ENCODE measurements at regions of chr21 and their contacts with region 1.

Region 1: GRCh38 chr21:15064576-15065391 is at the start of gene NRIP1:
- DNase-seq: peak; percentile 72 to 93 (median 82)
- ATAC-seq: peak; percentile 76
- H3K4me3 ChIP-seq: peak within 1 kb of the TSS; percentile 91
- H3K4me3 Mint-ChIP-seq: peak within 1 kb of the TSS; percentile 97
- H3K27ac ChIP-seq: peak within 1 kb of the TSS; percentile 79 to 84
- H3K27ac Mint-ChIP-seq: peak within 1 kb of the TSS; percentile 98
- H3K4me1 ChIP-seq: peaks cover 13% of the 10 kb centered on the region
- H3K4me1 Mint-ChIP-seq: peaks cover 50% of the 10 kb centered on the region
- H3K27me3 ChIP-seq: no peaks in the 10 kb centered on the region
- H3K27me3 Mint-ChIP-seq: peaks cover 5% of the 10 kb centered on the region
- CTCF ChIP-seq: no peak
- total RNA-seq, gene NRIP1: 41.6 to 50.1 TPM

Region 2: GRCh38 chr21:14382835-14383594 is 681.8 kb before region 1 on chr21 and contains the start of gene HSPA13:
- CTCF ChIA-PET with region 1: no interaction called
- POLR2A ChIA-PET with region 1: interaction called, 18 read pairs
- intact Hi-C with region 1: loop called (anchors 5 kb)
- DNase-seq: peak; percentile 95 to 100 (median 98)
- ATAC-seq: peak; percentile 93
- H3K4me3 ChIP-seq: peak within 1 kb of the TSS; percentile 80
- H3K4me3 Mint-ChIP-seq: peak within 1 kb of the TSS; percentile 96
- H3K27ac ChIP-seq: peak within 1 kb of the TSS; percentile 86
- H3K27ac Mint-ChIP-seq: peak within 1 kb of the TSS; percentile 97
- H3K4me1 ChIP-seq: peaks cover 17% of the 10 kb centered on the region
- H3K4me1 Mint-ChIP-seq: peaks cover 44% of the 10 kb centered on the region
- H3K27me3 ChIP-seq: no peaks in the 10 kb centered on the region
- H3K27me3 Mint-ChIP-seq: no peaks in the 10 kb centered on the region
- CTCF ChIP-seq: no peak
- total RNA-seq, gene HSPA13: 39.6 to 41.4 TPM

Region 3: GRCh38 chr21:14388282-14388681 is 676.5 kb before region 1 on chr21:
- CTCF ChIA-PET with region 1: no interaction called
- POLR2A ChIA-PET with region 1: interaction called, 18 read pairs
- intact Hi-C with region 1: loop called (anchors 5 kb)
- DNase-seq: no peak
- ATAC-seq: no peak
- H3K4me3 ChIP-seq: no peak overlapping the region
- H3K4me3 Mint-ChIP-seq: no peak overlapping the region
- H3K27ac ChIP-seq: no peak overlapping the region
- H3K27ac Mint-ChIP-seq: no peak overlapping the region
- H3K4me1 ChIP-seq: peaks cover 7% of the 10 kb centered on the region
- H3K4me1 Mint-ChIP-seq: peaks cover 7% of the 10 kb centered on the region
- H3K27me3 ChIP-seq: no peaks in the 10 kb centered on the region
- H3K27me3 Mint-ChIP-seq: peaks cover 10% of the 10 kb centered on the region
- CTCF ChIP-seq: no peak

Region 4: DNA sequence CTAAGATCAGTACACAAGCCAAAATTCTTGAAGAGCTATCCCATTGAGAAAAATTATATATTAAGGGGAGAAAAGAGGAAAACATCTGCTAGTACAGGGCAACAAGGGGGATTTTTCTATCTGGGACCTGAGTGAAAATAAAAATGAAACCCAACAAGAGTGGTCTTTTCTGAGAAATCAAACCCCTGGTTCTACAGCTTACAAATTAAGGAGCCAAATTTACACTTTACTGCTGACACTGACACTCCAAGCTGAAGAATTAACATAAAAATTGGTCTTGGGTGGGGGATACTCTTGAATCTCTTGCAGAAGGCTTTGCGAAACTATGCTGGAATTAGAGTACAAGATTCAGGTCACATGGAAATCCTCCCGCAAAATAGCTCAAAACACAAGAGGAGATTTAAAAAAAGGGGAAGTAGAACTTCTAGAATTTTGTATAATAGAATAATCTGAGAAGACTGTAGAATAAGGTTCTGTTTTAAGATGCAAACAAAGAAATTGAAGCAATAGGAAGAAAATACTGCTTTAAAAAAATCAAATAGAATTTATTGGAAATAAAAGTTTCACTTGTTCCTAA is 649.8 kb before region 1 on chr21:
- CTCF ChIA-PET with region 1: no interaction called
- POLR2A ChIA-PET with region 1: no interaction called
- intact Hi-C with region 1: no loop called
- DNase-seq: no peak
- ATAC-seq: no peak
- H3K4me3 ChIP-seq: no peak overlapping the region
- H3K4me3 Mint-ChIP-seq: no peak overlapping the region
- H3K27ac ChIP-seq: no peak overlapping the region
- H3K27ac Mint-ChIP-seq: no peak overlapping the region
- H3K4me1 ChIP-seq: no peaks in the 10 kb centered on the region
- H3K4me1 Mint-ChIP-seq: no peaks in the 10 kb centered on the region
- H3K27me3 ChIP-seq: no peaks in the 10 kb centered on the region
- H3K27me3 Mint-ChIP-seq: peaks cover 29% of the 10 kb centered on the region
- CTCF ChIP-seq: no peak

Region 5: GRCh38 chr21:15005391-15005790 is 59.4 kb before region 1 on chr21:
- CTCF ChIA-PET with region 1: no interaction called
- POLR2A ChIA-PET with region 1: interaction called, 50 read pairs
- intact Hi-C with region 1: loop called in 1 of 2 experiments (anchors 5 kb)
- DNase-seq: peak in 7 of 14 experiments; percentile 2 to 36 (median 20)
- ATAC-seq: peak; percentile 84
- H3K4me3 ChIP-seq: peak overlapping the region; percentile 37
- H3K4me3 Mint-ChIP-seq: peak overlapping the region; percentile 57
- H3K27ac ChIP-seq: peak overlapping the region in 1 of 2 donors; percentile 14
- H3K27ac Mint-ChIP-seq: peak overlapping the region; percentile 80
- H3K4me1 ChIP-seq: peaks cover 4% of the 10 kb centered on the region
- H3K4me1 Mint-ChIP-seq: peaks cover 50% of the 10 kb centered on the region
- H3K27me3 ChIP-seq: no peaks in the 10 kb centered on the region
- H3K27me3 Mint-ChIP-seq: no peaks in the 10 kb centered on the region
- CTCF ChIP-seq: no peak

Region 6: GRCh38 chr21:15108801-15109200 is 44.0 kb after region 1 on chr21:
- CTCF ChIA-PET with region 1: no interaction called
- POLR2A ChIA-PET with region 1: no interaction called
- intact Hi-C with region 1: loop called in 1 of 2 experiments (anchors 5 kb)
- DNase-seq: no peak
- ATAC-seq: no peak
- H3K4me3 ChIP-seq: no peak overlapping the region
- H3K4me3 Mint-ChIP-seq: no peak overlapping the region
- H3K27ac ChIP-seq: no peak overlapping the region
- H3K27ac Mint-ChIP-seq: no peak overlapping the region
- H3K4me1 ChIP-seq: no peaks in the 10 kb centered on the region
- H3K4me1 Mint-ChIP-seq: no peaks in the 10 kb centered on the region
- H3K27me3 ChIP-seq: no peaks in the 10 kb centered on the region
- H3K27me3 Mint-ChIP-seq: no peaks in the 10 kb centered on the region
- CTCF ChIP-seq: no peak

Region 7: GRCh38 chr21:15293240-15293639 is 228.5 kb after region 1 on chr21:
- CTCF ChIA-PET with region 1: no interaction called
- POLR2A ChIA-PET with region 1: no interaction called
- intact Hi-C with region 1: no loop called
- DNase-seq: no peak
- ATAC-seq: no peak
- H3K4me3 ChIP-seq: no peak overlapping the region
- H3K4me3 Mint-ChIP-seq: no peak overlapping the region
- H3K27ac ChIP-seq: no peak overlapping the region
- H3K27ac Mint-ChIP-seq: no peak overlapping the region
- H3K4me1 ChIP-seq: no peaks in the 10 kb centered on the region
- H3K4me1 Mint-ChIP-seq: no peaks in the 10 kb centered on the region
- H3K27me3 ChIP-seq: no peaks in the 10 kb centered on the region
- H3K27me3 Mint-ChIP-seq: no peaks in the 10 kb centered on the region
- CTCF ChIP-seq: no peak

Region 8: DNA sequence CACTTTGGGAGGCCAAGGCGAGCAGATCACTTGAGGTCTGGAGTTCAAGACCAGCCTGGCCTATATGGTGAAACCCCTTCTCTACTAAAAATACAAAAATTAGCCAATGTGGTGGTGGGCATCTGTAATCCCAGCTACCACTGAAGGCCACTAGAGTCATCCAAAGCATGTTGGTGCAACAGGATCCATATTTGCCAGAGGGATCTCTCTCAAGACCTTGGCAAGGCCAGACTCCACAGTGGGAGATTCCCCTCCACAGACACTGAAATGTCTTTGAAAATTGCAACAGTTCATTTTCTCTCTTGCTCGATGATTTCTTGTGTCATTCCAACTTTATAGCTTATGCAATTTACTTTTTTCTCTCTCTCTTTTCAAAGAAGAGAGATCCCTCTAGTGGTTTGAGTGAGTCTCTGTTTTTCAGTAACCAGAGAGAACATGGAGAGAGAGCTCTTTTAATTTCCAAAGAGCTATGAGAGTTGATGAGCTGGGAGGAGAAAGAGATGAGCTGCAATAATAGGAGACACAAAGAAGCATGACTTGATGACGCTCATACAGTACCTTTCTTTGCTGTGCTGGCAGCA is 488.2 kb after region 1 on chr21:
- CTCF ChIA-PET with region 1: no interaction called
- POLR2A ChIA-PET with region 1: interaction called, 20 read pairs
- intact Hi-C with region 1: loop called (anchors 2 to 5 kb)
- DNase-seq: peak in 3 of 14 experiments; percentile 32 to 41 (median 35)
- ATAC-seq: peak; percentile 61
- H3K4me3 ChIP-seq: no peak overlapping the region
- H3K4me3 Mint-ChIP-seq: no peak overlapping the region
- H3K27ac ChIP-seq: no peak overlapping the region
- H3K27ac Mint-ChIP-seq: no peak overlapping the region
- H3K4me1 ChIP-seq: peaks cover 11% of the 10 kb centered on the region
- H3K4me1 Mint-ChIP-seq: peaks cover 18% of the 10 kb centered on the region
- H3K27me3 ChIP-seq: no peaks in the 10 kb centered on the region
- H3K27me3 Mint-ChIP-seq: no peaks in the 10 kb centered on the region
- CTCF ChIP-seq: peak; percentile 75